ENCODE measurements at regions of chr22 and their contacts with region 1.

Region 1: GRCh38 chr22:23849009-23850006 is 8.4 kb upstream of the SLC2A11 start:
- DNase-seq: peak; percentile 90
- H3K4me3 ChIP-seq: peak overlapping the region in 1 of 4 donors; percentile 22
- H3K27ac ChIP-seq: peak overlapping the region in 2 of 4 donors; percentile 11 to 34
- H3K4me1 ChIP-seq: peaks cover 0 to 25% (median 11%) of the 10 kb centered on the region in 4 donors
- H3K27me3 ChIP-seq: no peaks in the 10 kb centered on the region
- CTCF ChIP-seq: peak; percentile 95 to 99 (median 98)
- EP300 ChIP-seq: no peak
- POLR2A ChIP-seq: no peak

Region 2: GRCh38 chr22:23767673-23768548 is 81.4 kb before region 1 on chr22 and contains the start of gene CHCHD10:
- in situ Hi-C with region 1: loop called in 1 of 4 experiments (anchors 5 kb)
- intact Hi-C with region 1: loop called (anchors 2 kb)
- DNase-seq: peak; percentile 90
- H3K4me3 ChIP-seq: peak within 1 kb of the TSS; percentile 67 to 80 (median 72)
- H3K27ac ChIP-seq: peak within 1 kb of the TSS; percentile 88 to 93 (median 89)
- H3K4me1 ChIP-seq: peaks cover 17 to 61% (median 39%) of the 10 kb centered on the region in 4 donors
- H3K27me3 ChIP-seq: no peaks in the 10 kb centered on the region
- CTCF ChIP-seq: peak; percentile 73 to 89 (median 86)
- EP300 ChIP-seq: no peak
- POLR2A ChIP-seq: peak; percentile 94
- total RNA-seq, gene CHCHD10: 15.3 to 80.1 (median 50.8) TPM

Region 3: DNA sequence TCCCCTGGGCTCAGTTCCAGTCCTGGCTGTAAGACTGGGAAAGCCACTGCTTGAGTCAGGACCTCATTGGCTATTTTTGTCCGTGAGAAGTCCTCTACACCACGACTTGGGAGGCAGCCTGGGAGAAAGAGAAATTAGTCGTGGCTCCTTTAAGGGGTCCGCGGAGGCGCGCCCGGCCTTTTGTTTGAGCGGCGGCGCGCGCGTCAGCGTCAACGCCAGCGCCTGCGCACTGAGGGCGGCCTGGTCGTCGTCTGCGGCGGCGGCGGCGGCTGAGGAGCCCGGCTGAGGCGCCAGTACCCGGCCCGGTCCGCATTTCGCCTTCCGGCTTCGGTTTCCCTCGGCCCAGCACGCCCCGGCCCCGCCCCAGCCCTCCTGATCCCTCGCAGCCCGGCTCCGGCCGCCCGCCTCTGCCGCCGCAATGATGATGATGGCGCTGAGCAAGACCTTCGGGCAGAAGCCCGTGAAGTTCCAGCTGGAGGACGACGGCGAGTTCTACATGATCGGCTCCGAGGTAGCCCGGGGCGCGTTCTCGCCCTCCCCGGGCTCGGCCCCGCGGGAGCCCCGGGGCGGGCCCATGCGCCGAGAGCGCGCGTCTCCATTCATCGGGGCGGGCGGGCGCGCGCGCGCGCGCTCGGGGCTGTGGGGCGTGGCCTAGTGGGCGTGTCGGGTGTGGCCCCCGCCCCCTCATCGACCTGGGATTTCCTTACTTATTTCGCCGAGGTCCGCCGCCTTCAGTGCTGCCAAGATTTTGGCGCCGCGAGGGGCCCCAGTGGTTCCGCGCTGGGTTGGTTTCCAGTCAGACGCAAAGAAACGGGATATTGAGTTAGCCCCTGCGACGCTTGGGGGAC is 62.3 kb before region 1 on chr22 and contains the start of gene SMARCB1:
- in situ Hi-C with region 1: loop called in 2 of 4 experiments (anchors 10 kb)
- intact Hi-C with region 1: no loop called
- DNase-seq: peak; percentile 92
- H3K4me3 ChIP-seq: peak within 1 kb of the TSS; percentile 73 to 89 (median 86)
- H3K27ac ChIP-seq: peak within 1 kb of the TSS; percentile 97 to 99 (median 98)
- H3K4me1 ChIP-seq: peaks cover 20 to 70% (median 40%) of the 10 kb centered on the region in 4 donors
- H3K27me3 ChIP-seq: no peaks in the 10 kb centered on the region
- CTCF ChIP-seq: no peak
- EP300 ChIP-seq: no peak
- POLR2A ChIP-seq: peak; percentile 84
- total RNA-seq, gene SMARCB1: 33.7 to 61.3 (median 54.7) TPM

Region 4: GRCh38 chr22:23888615-23889401 is 39.5 kb after region 1 on chr22:
- in situ Hi-C with region 1: no loop called
- intact Hi-C with region 1: no loop called
- DNase-seq: no peak
- H3K4me3 ChIP-seq: no peak overlapping the region
- H3K27ac ChIP-seq: peak overlapping the region; percentile 9 to 53 (median 18)
- H3K4me1 ChIP-seq: peaks cover 0 to 7% (median 5%) of the 10 kb centered on the region in 4 donors
- H3K27me3 ChIP-seq: no peaks in the 10 kb centered on the region
- CTCF ChIP-seq: no peak
- EP300 ChIP-seq: no peak
- POLR2A ChIP-seq: no peak